GM12878 (cell line): ENCODE measurements at regions of chr4 and their contacts with region 1.

Region 1: GRCh38 chr4:182917182-182918043 is at the start of gene DCTD:
- DNase-seq: no peak
- ATAC-seq: peak; percentile 89
- H3K4me3 ChIP-seq: peak within 1 kb of the TSS; percentile 81
- H3K27ac ChIP-seq: peak within 1 kb of the TSS; percentile 99
- H3K4me1 ChIP-seq: peaks cover 19% of the 10 kb centered on the region
- H3K27me3 ChIP-seq: no peaks in the 10 kb centered on the region
- CTCF ChIP-seq: peak; percentile 56 to 62 (median 61)
- EP300 ChIP-seq: peak; percentile 9 to 38; a peak in 2 of 4 replicates
- POLR2A ChIP-seq: peak; percentile 87
- RAD21 ChIP-seq: no peak
- polyA plus RNA-seq, gene DCTD: 37.8 to 58.4 TPM

Region 2: DNA sequence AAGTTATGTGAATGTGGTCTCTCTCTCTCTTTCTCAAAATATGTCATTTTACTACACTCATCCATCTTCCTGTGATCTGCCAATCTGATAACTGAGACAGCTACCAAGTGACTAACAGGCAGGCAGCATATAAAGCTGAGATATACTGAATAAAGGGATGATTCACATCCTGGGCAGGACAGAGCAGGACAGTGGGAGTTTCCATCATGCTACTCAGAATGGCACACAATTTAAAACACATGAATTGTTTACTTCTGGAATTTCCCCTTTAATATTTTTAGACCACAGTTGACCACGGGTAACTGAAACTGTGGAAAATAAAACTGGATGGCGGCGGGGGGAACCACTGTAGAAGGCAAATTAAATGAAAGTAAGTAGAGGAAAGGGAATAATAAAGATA is 58.4 kb after region 1 on chr4:
- CTCF ChIA-PET with region 1: interaction called, 4 read pairs
- POLR2A ChIA-PET with region 1: interaction called, 4 read pairs
- RAD21 ChIA-PET with region 1: interaction called, 3 read pairs
- SMC1A ChIA-PET with region 1: interaction called, 4 read pairs
- in situ Hi-C with region 1: no loop called
- intact Hi-C with region 1: loop called (anchors 5 kb)
- DNase-seq: peak; percentile 57
- ATAC-seq: peak; percentile 90
- H3K4me3 ChIP-seq: no peak overlapping the region
- H3K27ac ChIP-seq: no peak overlapping the region; the same call in 1 of the 2 replicates
- H3K4me1 ChIP-seq: peaks cover 8% of the 10 kb centered on the region
- H3K27me3 ChIP-seq: no peaks in the 10 kb centered on the region
- CTCF ChIP-seq: no peak
- EP300 ChIP-seq: no peak
- POLR2A ChIP-seq: no peak
- RAD21 ChIP-seq: no peak

Region 3: GRCh38 chr4:183716302-183716701 is 798.9 kb after region 1 on chr4:
- CTCF ChIA-PET with region 1: no interaction called
- POLR2A ChIA-PET with region 1: no interaction called
- RAD21 ChIA-PET with region 1: no interaction called
- SMC1A ChIA-PET with region 1: no interaction called
- in situ Hi-C with region 1: no loop called
- intact Hi-C with region 1: no loop called
- DNase-seq: no peak
- ATAC-seq: no peak
- H3K4me3 ChIP-seq: no peak overlapping the region
- H3K27ac ChIP-seq: no peak overlapping the region
- H3K4me1 ChIP-seq: no peaks in the 10 kb centered on the region
- H3K27me3 ChIP-seq: no peaks in the 10 kb centered on the region
- CTCF ChIP-seq: no peak
- EP300 ChIP-seq: no peak
- POLR2A ChIP-seq: no peak
- RAD21 ChIP-seq: no peak